ENCODE measurements at regions of chr2 and their contacts with region 1.

Region 1: DNA sequence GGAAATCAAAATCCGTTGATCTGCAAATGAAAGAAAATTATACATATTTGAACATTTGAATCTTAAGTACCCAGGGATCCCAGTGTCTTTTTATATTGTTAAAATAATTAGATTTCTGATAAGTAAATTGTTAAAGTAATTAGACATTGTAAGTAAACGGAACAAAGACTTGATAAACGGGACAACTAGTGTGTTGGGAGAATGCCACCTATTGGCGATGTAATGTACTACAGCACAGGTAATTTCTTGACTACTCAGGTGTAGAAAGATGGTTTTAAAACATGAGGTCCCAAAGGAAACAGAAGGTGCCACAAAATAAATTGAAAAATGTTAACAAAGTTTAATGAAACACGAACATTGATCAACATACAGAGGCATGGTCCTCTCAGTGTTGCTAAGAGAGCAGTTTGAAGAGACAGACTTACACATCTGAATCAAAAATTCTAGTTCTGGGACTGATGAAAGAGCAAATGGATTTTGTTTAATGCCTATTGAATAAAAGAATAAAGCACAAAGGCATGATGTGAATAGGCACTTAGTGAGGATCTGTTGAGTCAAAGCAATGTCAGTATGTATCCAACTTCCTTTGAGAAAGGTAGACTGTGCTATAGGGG is 103.4 kb upstream of the RASGRP3 start:
- DNase-seq: peak in 1 of 2 donors; percentile 16
- ATAC-seq: no peak
- H3K4me3 ChIP-seq: no peak overlapping the region
- H3K27ac ChIP-seq: no peak overlapping the region
- H3K4me1 ChIP-seq: peaks cover 0 to 17% (median 0%) of the 10 kb centered on the region in 9 donors
- H3K27me3 ChIP-seq: no peaks in the 10 kb centered on the region
- CTCF ChIP-seq: peak; percentile 50 to 83 (median 80)

Region 2: GRCh38 chr2:33275689-33276444 is 97.2 kb before region 1 on chr2:
- intact Hi-C with region 1: loop called in 1 of 10 experiments (anchors 10 kb)
- DNase-seq: peak in 1 of 2 donors; percentile 25
- ATAC-seq: peak; percentile 13 to 87 (median 58)
- H3K4me3 ChIP-seq: no peak overlapping the region
- H3K27ac ChIP-seq: peak overlapping the region in 4 of 10 donors; percentile 13 to 71 (median 51)
- H3K4me1 ChIP-seq: peaks cover 0 to 32% (median 3%) of the 10 kb centered on the region in 9 donors
- H3K27me3 ChIP-seq: no peaks in the 10 kb centered on the region
- CTCF ChIP-seq: no peak

Region 3: DNA sequence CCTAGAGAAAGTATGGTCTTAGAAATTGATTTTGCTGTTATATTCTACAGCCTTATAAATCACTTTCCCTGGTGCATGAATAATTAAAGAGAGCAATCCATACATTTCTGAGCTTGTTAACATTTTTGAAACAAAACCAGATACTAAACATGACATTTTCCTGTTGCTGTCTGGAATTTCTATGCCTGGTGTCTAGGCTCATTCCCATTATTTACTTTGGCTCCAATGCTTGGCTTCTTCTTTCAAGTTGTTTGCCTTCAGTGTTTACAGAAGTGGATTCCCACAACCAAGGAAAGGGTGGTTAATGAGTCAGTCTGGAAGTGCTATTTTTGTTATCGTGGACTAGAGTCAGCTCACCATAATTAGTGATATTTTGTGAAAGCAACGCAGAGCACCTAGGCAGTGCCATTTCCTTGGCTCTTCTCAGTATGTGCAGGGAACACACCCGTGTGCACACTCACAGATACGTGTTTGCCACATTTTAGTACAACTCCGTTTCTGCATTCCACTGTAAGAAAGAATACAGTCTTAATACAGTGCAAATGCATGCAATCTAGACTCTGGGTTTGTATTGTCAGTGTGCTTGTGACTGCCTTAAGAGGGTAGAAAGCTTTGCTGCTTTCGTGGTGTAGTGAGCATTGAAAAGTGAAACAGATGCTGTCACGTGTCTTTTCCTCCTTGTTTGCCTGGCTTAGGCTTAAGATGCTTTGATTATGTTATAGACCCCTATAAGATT is 81.6 kb before region 1 on chr2:
- intact Hi-C with region 1: loop called in 1 of 10 experiments (anchors 5 kb)
- DNase-seq: no peak
- ATAC-seq: peak; percentile 55 to 78 (median 72)
- H3K4me3 ChIP-seq: peak overlapping the region in 7 of 10 donors; percentile 8 to 36 (median 34)
- H3K27ac ChIP-seq: peak overlapping the region; percentile 10 to 81 (median 59)
- H3K4me1 ChIP-seq: peaks cover 0 to 43% (median 33%) of the 10 kb centered on the region in 9 donors
- H3K27me3 ChIP-seq: no peaks in the 10 kb centered on the region
- CTCF ChIP-seq: no peak

Measured in heart right ventricle (tissue), 16 donors.